Heart right ventricle (tissue), 16 donors: ENCODE measurements at regions of chr16 and their contacts with region 1.

Region 1: DNA sequence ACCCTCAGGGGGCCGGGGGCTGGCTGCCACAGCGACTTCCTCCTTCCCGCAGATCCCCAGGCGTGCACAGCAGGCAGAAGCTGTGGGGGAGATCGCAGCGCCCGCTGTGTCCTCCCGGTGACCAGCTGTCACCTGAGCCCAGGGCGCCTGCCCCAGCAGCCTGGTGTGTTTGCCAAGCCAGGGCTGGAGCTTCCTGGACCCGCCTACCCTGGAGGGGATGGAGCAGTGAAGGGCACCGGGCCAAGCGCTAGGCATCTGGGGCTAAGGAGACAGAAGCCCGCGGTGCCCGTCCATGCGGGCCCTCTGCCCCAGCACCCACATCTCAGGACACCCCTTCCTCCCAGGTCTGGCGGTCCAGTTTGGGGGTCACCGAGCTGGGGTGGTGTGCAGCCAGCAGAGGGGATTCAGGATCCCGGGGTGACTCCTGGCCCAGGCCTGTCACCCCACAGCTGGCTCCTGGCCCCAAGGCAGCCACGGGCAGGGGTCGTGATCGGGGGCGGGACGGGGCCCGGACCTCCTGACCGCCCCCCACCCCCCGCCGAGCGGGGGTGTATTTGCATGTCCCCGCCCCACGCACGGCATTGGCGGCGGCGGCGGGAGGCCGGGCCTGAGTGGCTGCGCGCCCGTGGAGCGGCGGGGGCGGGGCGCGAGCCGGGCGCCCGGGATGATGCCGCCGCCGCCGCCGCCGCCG is at the start of gene RAB26:
- DNase-seq: peak; percentile 84
- ATAC-seq: peak; percentile 82 to 93 (median 90)
- H3K4me3 ChIP-seq: peak within 1 kb of the TSS; percentile 29 to 64 (median 53)
- H3K27ac ChIP-seq: peak within 1 kb of the TSS; percentile 13 to 91 (median 82)
- H3K4me1 ChIP-seq: peaks cover 20 to 58% (median 52%) of the 10 kb centered on the region in 9 donors
- H3K27me3 ChIP-seq: peaks cover 0 to 14% (median 0%) of the 10 kb centered on the region in 7 donors
- CTCF ChIP-seq: no peak
- total RNA-seq, gene RAB26: 0.74 to 4.3 (median 1.6) TPM

Region 2: DNA sequence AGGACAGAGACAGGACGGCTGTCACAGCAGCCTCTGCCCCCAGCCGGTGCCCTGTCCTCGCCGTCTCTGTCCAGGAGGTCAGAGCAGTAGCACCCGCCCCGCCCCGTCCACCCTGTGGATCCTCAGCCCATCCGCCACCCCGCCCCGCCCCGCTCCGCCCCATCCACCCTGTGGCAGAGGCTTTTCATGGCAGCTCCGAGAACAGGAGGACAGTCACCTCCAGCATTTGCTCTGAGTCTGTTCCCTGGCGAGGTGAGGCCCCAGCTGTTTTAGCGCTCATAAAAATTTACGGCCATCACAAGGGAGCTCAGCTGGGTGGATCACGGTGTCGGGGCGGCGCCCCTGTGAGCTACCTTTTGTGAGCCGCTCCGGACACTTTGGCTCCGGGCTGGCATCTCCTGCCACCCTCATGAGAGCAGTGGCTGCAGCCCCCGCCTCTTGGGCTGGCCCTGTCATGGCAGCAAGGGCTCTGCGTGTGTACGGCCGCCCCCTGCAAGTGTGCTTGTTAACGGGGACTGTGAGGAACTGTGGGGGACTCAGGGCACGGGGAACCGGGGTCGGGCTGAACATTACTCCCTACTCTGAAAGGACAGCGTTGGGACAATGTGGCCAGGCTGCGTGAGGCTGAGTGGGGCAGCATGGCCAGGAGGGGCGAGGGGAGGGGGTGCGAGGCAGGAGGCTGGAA is 1315.3 kb before region 1 on chr16:
- intact Hi-C with region 1: no loop called
- DNase-seq: no peak
- ATAC-seq: no peak
- H3K4me3 ChIP-seq: no peak overlapping the region
- H3K27ac ChIP-seq: no peak overlapping the region
- H3K4me1 ChIP-seq: no peaks in the 10 kb centered on the region
- H3K27me3 ChIP-seq: peaks cover 0 to 9% (median 0%) of the 10 kb centered on the region in 7 donors
- CTCF ChIP-seq: no peak

Region 3: DNA sequence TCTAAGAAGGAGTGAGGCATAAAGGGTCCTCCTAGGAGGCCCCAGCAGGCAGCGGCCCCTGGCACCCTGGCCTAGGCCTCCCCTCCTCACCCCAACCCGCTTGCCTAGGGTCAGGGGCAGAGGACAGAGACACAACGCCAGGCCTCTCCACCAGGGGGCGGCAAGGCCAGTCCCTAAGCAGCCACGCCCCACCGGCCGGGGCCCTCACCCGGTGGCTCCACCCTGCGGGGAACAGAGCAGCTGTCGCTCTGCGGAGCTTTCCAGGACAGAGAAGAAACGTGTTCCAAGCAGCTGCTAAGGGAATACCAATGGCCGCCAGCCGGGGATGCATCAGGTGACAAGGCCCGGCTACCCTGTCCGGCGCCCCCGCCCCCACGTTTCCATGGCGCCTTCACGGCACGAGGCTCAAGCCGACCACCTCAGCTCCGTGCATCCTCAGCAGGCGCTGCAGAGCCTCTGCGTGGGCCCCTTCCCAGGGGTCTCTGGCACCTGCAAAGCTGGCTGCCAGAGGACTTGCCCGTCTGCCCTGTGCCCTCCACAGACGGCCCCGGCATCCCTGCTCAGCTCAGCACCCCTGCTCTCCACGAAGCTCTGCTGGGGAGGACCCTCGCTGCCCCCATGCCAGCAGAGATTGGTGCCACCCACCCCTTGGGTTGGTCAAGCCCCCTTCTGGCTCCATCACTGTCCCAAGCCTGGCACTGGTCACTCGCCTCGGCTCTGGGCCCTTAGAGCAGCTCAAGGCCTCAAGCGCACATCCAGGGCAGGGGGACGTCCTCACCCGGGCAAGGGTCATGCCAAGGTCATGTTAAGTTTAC is 144.1 kb before region 1 on chr16:
- intact Hi-C with region 1: loop called in 2 of 10 experiments (anchors 5 to 10 kb)
- DNase-seq: peak; percentile 89 to 90
- ATAC-seq: peak; percentile 80 to 90 (median 87)
- H3K4me3 ChIP-seq: peak overlapping the region in 6 of 10 donors; percentile 9 to 34 (median 22)
- H3K27ac ChIP-seq: peak overlapping the region in 4 of 10 donors; percentile 34 to 59 (median 40)
- H3K4me1 ChIP-seq: peaks cover 34 to 59% (median 47%) of the 10 kb centered on the region in 9 donors
- H3K27me3 ChIP-seq: no peaks in the 10 kb centered on the region
- CTCF ChIP-seq: peak; percentile 87 to 98 (median 97)

Region 4: DNA sequence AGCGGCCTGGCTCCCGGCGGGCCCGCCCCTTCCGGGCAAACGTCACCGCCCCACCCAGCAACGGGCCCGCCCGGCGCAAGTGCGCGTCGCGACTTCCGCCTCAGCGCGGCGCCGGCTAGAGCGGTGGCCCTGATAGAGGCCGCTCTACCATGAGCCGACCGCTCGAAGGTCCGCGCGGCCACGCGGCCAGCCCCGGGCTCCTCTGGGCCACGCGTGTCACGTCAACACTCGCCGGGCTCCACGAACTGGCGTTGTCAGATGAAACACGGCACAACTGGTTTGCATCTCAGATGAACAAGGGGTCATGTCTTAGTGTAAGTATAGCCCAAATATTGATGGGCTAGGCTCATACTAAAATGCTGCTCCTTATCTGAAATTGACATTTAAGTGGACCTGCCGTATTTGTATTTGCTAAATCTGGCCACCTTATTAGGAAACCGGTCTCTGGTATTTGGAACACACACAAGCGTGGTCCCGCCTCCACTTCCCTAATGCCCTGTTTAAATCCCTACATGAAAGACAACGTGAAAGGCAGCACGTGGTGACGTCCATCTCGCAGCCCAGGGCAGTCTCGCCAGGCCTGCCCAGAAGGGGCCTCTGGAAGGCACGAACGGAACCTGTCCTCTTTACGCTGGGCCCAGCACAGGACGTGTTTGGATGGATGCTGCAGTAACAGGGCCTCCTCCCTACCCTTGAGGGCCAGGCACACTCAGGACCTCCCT is 138.2 kb before region 1 on chr16 and contains the start of gene ZNF598:
- intact Hi-C with region 1: loop called in 1 of 10 experiments (anchors 10 kb)
- DNase-seq: peak; percentile 84 to 87
- ATAC-seq: peak; percentile 94 to 98 (median 97)
- H3K4me3 ChIP-seq: peak within 1 kb of the TSS; percentile 69 to 99 (median 90)
- H3K27ac ChIP-seq: peak within 1 kb of the TSS; percentile 76 to 96 (median 92)
- H3K4me1 ChIP-seq: peaks cover 23 to 50% (median 40%) of the 10 kb centered on the region in 9 donors
- H3K27me3 ChIP-seq: no peaks in the 10 kb centered on the region
- CTCF ChIP-seq: peak in 3 of 9 donors; percentile 2 to 25 (median 20)
- total RNA-seq, gene ZNF598: 9.5 to 24.7 (median 14.2) TPM

Region 5: DNA sequence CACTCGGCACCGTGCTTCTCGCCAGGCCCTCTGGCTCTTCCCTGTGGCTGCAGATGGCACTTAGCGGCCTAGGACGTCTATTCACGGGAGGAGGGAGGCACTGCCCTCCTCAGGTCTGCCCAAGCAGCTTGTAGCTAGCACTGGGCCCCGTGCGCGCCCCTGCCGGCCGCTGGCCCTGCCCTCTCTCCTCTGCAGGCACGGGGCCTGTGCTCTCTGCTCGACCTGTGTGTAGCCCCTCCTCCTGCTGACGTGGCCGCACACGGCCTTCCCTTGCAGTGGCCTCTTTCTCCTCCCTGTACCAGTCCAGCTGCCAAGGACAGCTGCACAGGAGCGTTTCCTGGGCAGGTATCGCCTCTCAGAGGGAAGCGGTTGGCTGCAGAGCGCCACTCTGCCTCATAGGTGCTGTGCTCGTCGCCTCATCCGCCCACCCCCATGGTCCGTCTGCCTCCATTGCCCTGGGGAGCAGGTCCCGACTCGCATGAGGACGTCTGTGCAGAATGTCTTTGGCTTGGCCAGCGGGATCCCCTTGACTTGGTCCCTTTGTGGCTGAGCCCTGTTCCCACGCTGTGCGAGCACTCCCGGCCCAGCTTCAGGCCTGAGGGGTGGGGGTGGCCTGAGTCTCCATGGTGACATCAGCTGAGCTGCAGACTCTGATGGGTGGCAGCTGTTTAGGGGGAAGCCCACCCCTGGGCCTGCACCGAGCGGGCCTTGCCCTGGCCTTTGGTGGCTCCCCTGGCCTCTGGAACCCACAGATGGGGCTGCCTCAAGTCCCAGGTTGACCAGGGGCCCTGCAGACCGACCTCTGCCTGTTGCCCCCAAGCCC is 65.8 kb before region 1 on chr16:
- intact Hi-C with region 1: loop called in 1 of 10 experiments (anchors 10 kb)
- DNase-seq: peak; percentile 34 to 43
- ATAC-seq: peak; percentile 20 to 53 (median 33)
- H3K4me3 ChIP-seq: no peak overlapping the region
- H3K27ac ChIP-seq: peak overlapping the region in 8 of 10 donors; percentile 12 to 64 (median 50)
- H3K4me1 ChIP-seq: peaks cover 5 to 33% (median 28%) of the 10 kb centered on the region in 9 donors
- H3K27me3 ChIP-seq: no peaks in the 10 kb centered on the region
- CTCF ChIP-seq: peak in 4 of 9 donors; percentile 11 to 27 (median 16)

Region 6: GRCh38 chr16:2223375-2224182 is 75.5 kb after region 1 on chr16 and contains the start of gene E4F1:
- intact Hi-C with region 1: no loop called
- DNase-seq: peak; percentile 100
- ATAC-seq: peak; percentile 99 to 100 (median 100)
- H3K4me3 ChIP-seq: peak within 1 kb of the TSS; percentile 69 to 96 (median 92)
- H3K27ac ChIP-seq: peak within 1 kb of the TSS; percentile 49 to 96 (median 90)
- H3K4me1 ChIP-seq: peaks cover 10 to 32% (median 25%) of the 10 kb centered on the region in 9 donors
- H3K27me3 ChIP-seq: no peaks in the 10 kb centered on the region
- CTCF ChIP-seq: peak in 4 of 9 donors; percentile 3 to 19 (median 10)
- total RNA-seq, gene E4F1: 8.4 to 16.3 (median 10.7) TPM

Region 7: GRCh38 chr16:2251483-2252240 is 103.5 kb after region 1 on chr16 and contains the start of gene ECI1:
- intact Hi-C with region 1: loop called in 1 of 10 experiments (anchors 5 kb)
- DNase-seq: peak; percentile 96 to 99
- ATAC-seq: peak; percentile 96 to 99 (median 98)
- H3K4me3 ChIP-seq: peak within 1 kb of the TSS; percentile 46 to 99 (median 76)
- H3K27ac ChIP-seq: peak within 1 kb of the TSS; percentile 82 to 98 (median 94)
- H3K4me1 ChIP-seq: peaks cover 7 to 28% (median 18%) of the 10 kb centered on the region in 9 donors
- H3K27me3 ChIP-seq: no peaks in the 10 kb centered on the region
- CTCF ChIP-seq: peak; percentile 57 to 94 (median 79)
- total RNA-seq, gene ECI1: 118 to 243 (median 153) TPM